ENCODE measurements at regions of chr6 and their contacts with region 1.

Region 1: DNA sequence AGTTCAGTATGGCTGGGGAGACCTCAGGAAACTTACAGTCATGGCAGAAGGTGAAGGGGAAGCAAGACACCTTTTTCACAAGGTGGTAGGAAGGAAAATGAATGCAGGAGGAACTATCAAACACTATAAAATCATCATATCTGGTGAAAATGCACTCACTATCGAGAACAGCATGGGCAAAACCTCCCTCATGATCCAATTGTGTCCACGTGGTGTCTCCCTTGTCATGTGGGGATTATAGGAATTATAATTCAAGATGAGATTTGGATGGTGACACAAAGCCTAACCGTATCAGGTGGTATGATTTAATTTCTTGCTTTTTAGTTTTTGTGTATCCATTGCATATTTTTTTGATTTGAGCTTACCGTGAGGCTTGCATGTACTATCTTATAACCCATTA is 133.2 kb upstream of the SYNCRIP start:
- DNase-seq: no peak
- H3K4me3 ChIP-seq: no peak overlapping the region
- H3K27ac ChIP-seq: no peak overlapping the region
- H3K4me1 ChIP-seq: no peaks in the 10 kb centered on the region
- H3K27me3 ChIP-seq: no peaks in the 10 kb centered on the region
- CTCF ChIP-seq: no peak

Region 2: GRCh38 chr6:85669735-85670194 is 106.1 kb before region 1 on chr6:
- CTCF ChIA-PET with region 1: no interaction called
- dilution Hi-C with region 1: no loop called
- in situ Hi-C with region 1: no loop called
- intact Hi-C with region 1: no loop called
- DNase-seq: peak; percentile 94
- H3K4me3 ChIP-seq: no peak overlapping the region
- H3K27ac ChIP-seq: peak overlapping the region; percentile 72
- H3K4me1 ChIP-seq: peaks cover 21% of the 10 kb centered on the region
- H3K27me3 ChIP-seq: no peaks in the 10 kb centered on the region
- CTCF ChIP-seq: no peak

Region 3: GRCh38 chr6:85887462-85887861 is 111.6 kb after region 1 on chr6:
- CTCF ChIA-PET with region 1: no interaction called
- dilution Hi-C with region 1: loop called (anchors 5 kb)
- in situ Hi-C with region 1: no loop called
- intact Hi-C with region 1: no loop called
- DNase-seq: peak; percentile 11
- H3K4me3 ChIP-seq: no peak overlapping the region
- H3K27ac ChIP-seq: no peak overlapping the region
- H3K4me1 ChIP-seq: no peaks in the 10 kb centered on the region
- H3K27me3 ChIP-seq: no peaks in the 10 kb centered on the region
- CTCF ChIP-seq: no peak